ENCODE measurements at regions of chr16 and their contacts with region 1.

Region 1: GRCh38 chr16:2251483-2252240 is at the start of gene ECI1:
- DNase-seq: peak; percentile 54 to 92 (median 75)
- ATAC-seq: peak; percentile 68
- H3K4me3 ChIP-seq: peak within 1 kb of the TSS; percentile 66
- H3K4me3 Mint-ChIP-seq: peak within 1 kb of the TSS; percentile 92
- H3K27ac ChIP-seq: peak within 1 kb of the TSS; percentile 53 to 80
- H3K27ac Mint-ChIP-seq: peak within 1 kb of the TSS; percentile 93
- H3K4me1 ChIP-seq: peaks cover 19% of the 10 kb centered on the region
- H3K4me1 Mint-ChIP-seq: peaks cover 11% of the 10 kb centered on the region
- H3K27me3 ChIP-seq: no peaks in the 10 kb centered on the region
- H3K27me3 Mint-ChIP-seq: no peaks in the 10 kb centered on the region
- CTCF ChIP-seq: peak; percentile 44
- total RNA-seq, gene ECI1: 10.1 to 12.5 TPM

Region 2: GRCh38 chr16:2023098-2023925 is 228.3 kb before region 1 on chr16:
- CTCF ChIA-PET with region 1: no interaction called
- POLR2A ChIA-PET with region 1: no interaction called
- intact Hi-C with region 1: loop called in 1 of 2 experiments (anchors 10 kb)
- DNase-seq: peak; percentile 87 to 99 (median 96)
- ATAC-seq: peak; percentile 92
- H3K4me3 ChIP-seq: peak overlapping the region; percentile 31
- H3K4me3 Mint-ChIP-seq: peak overlapping the region; percentile 72
- H3K27ac ChIP-seq: peak overlapping the region in 1 of 2 donors; percentile 43
- H3K27ac Mint-ChIP-seq: peak overlapping the region; percentile 66
- H3K4me1 ChIP-seq: peaks cover 50% of the 10 kb centered on the region
- H3K4me1 Mint-ChIP-seq: peaks cover 19% of the 10 kb centered on the region
- H3K27me3 ChIP-seq: peaks cover 25 to 33% of the 10 kb centered on the region in 2 experiments
- H3K27me3 Mint-ChIP-seq: peaks cover 29% of the 10 kb centered on the region
- CTCF ChIP-seq: peak; percentile 90

Region 3: DNA sequence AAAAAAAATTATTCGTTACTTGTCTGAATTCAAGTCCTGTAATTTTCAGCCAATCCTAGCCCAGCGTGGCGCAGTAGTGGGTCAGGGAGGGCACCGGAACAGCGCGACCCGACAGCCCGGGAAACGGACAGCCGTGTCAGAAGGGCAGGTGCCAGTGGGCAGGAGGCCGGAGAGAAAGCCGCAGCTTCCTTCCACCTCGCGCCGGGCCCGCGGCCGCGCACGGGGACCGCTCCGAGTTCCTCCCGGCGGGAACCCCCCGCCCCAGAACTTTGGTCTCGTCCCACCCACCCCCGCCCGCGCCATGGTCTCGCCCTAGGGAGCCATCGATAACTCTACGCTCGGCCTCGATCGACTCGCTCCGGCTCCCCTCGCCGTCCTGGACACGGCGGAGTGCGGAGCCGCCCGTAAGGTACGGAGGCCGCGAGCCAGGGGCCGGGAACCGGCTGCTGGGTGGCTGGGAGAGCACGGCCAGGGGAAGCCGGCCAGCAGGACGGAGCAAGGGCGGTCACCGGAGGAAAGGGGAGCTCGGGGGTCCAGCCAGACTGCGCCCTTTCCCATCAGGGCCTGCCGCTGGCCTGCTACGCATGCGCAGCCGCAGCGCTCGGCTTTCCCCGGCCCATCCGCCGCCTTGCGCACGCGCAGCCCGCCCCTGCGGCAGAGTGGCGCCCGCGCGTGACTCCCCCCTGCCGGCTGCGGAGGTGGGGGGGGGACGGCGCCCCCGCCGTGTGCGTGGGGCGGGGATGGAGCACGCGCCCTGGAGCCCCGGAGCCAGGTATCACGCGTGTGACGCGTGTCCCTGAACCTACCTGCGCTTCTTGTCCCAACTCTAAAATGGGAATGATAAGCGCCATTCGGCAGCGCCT is 46.3 kb before region 1 on chr16 and contains the start of gene MLST8:
- CTCF ChIA-PET with region 1: no interaction called
- POLR2A ChIA-PET with region 1: interaction called, 3 read pairs
- intact Hi-C with region 1: loop called (anchors 2 to 5 kb)
- DNase-seq: peak; percentile 82 to 98 (median 92)
- ATAC-seq: peak; percentile 82
- H3K4me3 ChIP-seq: peak within 1 kb of the TSS; percentile 59
- H3K4me3 Mint-ChIP-seq: peak within 1 kb of the TSS; percentile 90
- H3K27ac ChIP-seq: peak within 1 kb of the TSS; percentile 90 to 94
- H3K27ac Mint-ChIP-seq: peak within 1 kb of the TSS; percentile 79
- H3K4me1 ChIP-seq: peaks cover 23% of the 10 kb centered on the region
- H3K4me1 Mint-ChIP-seq: peaks cover 13% of the 10 kb centered on the region
- H3K27me3 ChIP-seq: no peaks in the 10 kb centered on the region
- H3K27me3 Mint-ChIP-seq: no peaks in the 10 kb centered on the region
- CTCF ChIP-seq: peak; percentile 26
- total RNA-seq, gene MLST8: 22.9 to 26.4 TPM

Region 4: DNA sequence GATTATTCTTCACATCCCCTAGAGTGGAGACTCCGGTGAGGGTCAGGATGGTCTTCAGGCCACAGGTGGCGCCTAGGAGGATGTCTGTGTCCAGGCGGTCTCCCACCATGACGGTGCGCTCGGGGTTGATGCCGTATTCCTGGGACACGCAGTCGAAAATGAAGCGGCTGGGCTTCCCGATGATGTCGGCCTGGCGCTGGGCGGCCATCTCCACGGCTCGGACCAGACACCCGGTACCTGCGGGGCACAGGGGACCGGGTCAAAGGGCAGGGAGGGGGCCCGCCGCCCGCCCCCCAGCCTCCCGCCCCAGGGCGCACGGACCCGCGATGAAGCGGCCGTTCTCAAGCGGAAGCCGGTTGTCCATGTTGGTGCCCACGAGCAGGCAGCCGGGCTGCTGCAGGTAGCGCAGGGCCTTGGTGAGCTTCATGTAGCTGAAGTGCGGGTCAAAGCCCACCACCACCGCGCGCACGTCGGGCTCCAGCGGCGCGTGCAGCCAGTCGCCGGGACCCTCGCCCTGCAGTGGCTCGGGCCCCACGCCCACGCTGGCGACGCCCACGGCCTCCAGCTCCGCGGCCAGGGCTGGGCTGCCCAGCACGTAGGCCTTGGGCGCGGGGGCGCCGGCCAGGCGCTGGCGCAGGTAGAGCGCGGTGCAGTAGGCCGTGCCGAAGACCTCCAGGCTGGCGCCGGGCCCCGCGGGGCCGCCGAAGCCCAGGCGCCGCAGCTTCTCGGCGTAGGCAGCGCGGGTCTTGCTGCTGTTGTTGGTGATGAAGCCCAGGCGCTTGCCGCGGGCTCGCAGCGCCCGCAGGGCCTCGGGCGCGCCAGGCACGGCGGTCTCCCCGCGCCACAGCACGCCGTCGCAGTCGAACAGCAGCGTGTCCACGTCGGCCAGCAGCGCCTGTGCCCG is 37.6 kb before region 1 on chr16:
- CTCF ChIA-PET with region 1: interaction called, 5 read pairs
- POLR2A ChIA-PET with region 1: interaction called, 13 read pairs
- intact Hi-C with region 1: loop called in 1 of 2 experiments (anchors 5 kb)
- DNase-seq: no peak
- ATAC-seq: no peak
- H3K4me3 ChIP-seq: peak overlapping the region; percentile 34
- H3K4me3 Mint-ChIP-seq: peak overlapping the region; percentile 85
- H3K27ac ChIP-seq: peak overlapping the region in 1 of 2 donors; percentile 21
- H3K27ac Mint-ChIP-seq: peak overlapping the region; percentile 66
- H3K4me1 ChIP-seq: peaks cover 25% of the 10 kb centered on the region
- H3K4me1 Mint-ChIP-seq: peaks cover 11% of the 10 kb centered on the region
- H3K27me3 ChIP-seq: no peaks in the 10 kb centered on the region
- H3K27me3 Mint-ChIP-seq: no peaks in the 10 kb centered on the region
- CTCF ChIP-seq: no peak

Region 5: DNA sequence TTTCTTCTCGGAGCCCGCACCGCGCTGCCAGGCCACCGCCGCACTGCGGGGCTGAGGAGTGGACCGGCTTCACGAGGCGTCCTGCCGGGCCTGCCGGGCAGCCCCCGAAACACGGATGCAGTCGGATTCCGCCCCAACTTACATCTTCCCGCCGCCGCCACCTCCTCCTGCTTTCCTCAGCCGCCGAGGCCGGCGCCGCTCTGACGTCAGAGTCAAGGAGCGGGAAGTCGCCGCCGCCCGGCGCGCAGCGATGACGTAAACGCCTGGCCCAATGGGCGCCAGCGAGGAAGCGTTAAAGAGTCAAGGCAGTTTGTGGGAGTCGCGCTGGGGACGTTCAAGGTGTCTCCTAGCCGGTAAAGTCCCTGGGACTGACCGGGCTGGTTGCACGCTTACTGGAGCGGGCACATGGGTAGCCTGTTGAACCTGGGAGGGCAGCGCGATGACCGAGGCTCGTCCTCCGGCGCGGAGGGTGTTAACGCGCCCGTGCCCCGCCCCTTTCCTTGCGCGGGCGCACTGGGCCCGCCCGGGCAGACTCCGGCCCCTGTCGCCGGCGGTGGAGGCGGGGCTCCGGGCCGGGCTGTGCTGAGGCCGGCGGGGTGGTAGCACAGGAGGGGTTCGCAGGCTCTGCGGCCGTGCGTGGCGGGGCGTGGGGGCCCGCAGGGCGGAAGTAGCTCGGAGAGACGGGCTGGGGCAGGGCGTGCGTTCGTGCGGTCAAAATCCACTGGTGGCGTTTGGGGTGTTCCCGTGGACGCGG is 16.4 kb after region 1 on chr16 and contains the start of gene RNPS1:
- CTCF ChIA-PET with region 1: no interaction called
- POLR2A ChIA-PET with region 1: interaction called, 16 read pairs
- intact Hi-C with region 1: loop called in 1 of 2 experiments (anchors 2 kb)
- DNase-seq: peak; percentile 87 to 98 (median 96)
- ATAC-seq: peak; percentile 76
- H3K4me3 ChIP-seq: peak within 1 kb of the TSS; percentile 85
- H3K4me3 Mint-ChIP-seq: peak within 1 kb of the TSS; percentile 99
- H3K27ac ChIP-seq: peak within 1 kb of the TSS; percentile 92 to 99
- H3K27ac Mint-ChIP-seq: peak within 1 kb of the TSS; percentile 100
- H3K4me1 ChIP-seq: peaks cover 35% of the 10 kb centered on the region
- H3K4me1 Mint-ChIP-seq: peaks cover 41% of the 10 kb centered on the region
- H3K27me3 ChIP-seq: no peaks in the 10 kb centered on the region
- H3K27me3 Mint-ChIP-seq: no peaks in the 10 kb centered on the region
- CTCF ChIP-seq: no peak
- total RNA-seq, gene RNPS1: 211 to 214 TPM

Region 6: GRCh38 chr16:2278272-2278608 is 26.6 kb after region 1 on chr16:
- CTCF ChIA-PET with region 1: no interaction called
- POLR2A ChIA-PET with region 1: no interaction called
- intact Hi-C with region 1: no loop called
- DNase-seq: no peak
- ATAC-seq: no peak
- H3K4me3 ChIP-seq: no peak overlapping the region
- H3K4me3 Mint-ChIP-seq: no peak overlapping the region
- H3K27ac ChIP-seq: no peak overlapping the region
- H3K27ac Mint-ChIP-seq: no peak overlapping the region
- H3K4me1 ChIP-seq: no peaks in the 10 kb centered on the region
- H3K4me1 Mint-ChIP-seq: no peaks in the 10 kb centered on the region
- H3K27me3 ChIP-seq: no peaks in the 10 kb centered on the region
- H3K27me3 Mint-ChIP-seq: no peaks in the 10 kb centered on the region
- CTCF ChIP-seq: no peak